Upper lobe of right lung (tissue), 1 donor: ENCODE measurements at regions of chr17 and their contacts with region 1.

Region 1: DNA sequence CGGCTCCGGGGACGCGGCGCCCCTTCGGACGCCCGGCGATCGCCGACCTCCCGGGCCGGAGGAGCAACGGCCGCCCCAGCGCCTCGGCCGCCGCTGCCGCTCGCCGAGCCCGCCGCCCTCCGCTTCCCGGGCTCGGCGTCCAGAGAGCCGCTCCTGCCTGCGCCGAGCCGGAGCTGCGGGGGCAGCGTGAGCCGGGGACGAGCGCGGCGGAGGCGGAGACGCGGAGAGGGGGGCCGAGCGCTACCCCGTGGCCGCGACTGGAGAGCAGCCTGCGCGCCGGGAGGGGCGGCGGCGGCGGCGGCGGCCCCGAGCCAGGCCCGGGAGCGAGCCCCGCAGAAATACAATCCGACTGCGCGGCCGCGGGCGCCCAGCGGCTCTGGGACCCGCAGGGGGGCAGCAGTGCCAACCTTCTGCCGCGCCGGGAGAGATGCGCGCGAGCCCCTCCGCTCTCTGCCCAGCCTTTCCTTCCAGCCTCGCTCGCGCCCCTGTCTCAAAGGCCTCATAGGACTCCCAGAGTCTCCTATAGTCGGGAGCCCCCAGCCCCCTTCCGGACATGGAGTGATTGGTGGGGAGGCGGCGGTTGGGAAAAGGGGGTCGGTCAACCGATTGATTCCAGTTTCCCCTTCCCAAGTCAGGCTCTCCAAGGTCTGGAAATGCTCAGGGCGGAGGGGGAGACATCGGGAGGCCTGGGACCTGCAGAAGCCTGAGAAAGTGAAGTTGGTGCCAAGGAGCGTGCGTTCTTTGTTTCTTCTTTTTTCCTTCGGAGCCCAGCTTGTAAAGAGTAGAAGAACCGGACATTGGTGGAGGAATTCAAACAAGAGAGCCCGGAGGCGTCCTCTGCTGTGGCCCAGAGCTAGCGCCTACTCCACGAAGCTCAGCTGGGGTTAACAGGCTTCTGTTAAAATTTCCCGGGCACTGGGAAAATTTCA is 1.1 kb upstream of the SDK2 start:
- DNase-seq: peak; percentile 68
- ATAC-seq: peak; percentile 67
- H3K4me3 ChIP-seq: peak overlapping the region; percentile 48
- H3K27ac ChIP-seq: no peak overlapping the region
- H3K4me1 ChIP-seq: peaks cover 18% of the 10 kb centered on the region
- H3K27me3 ChIP-seq: peaks cover 70% of the 10 kb centered on the region
- CTCF ChIP-seq: peak; percentile 8

Region 2: DNA sequence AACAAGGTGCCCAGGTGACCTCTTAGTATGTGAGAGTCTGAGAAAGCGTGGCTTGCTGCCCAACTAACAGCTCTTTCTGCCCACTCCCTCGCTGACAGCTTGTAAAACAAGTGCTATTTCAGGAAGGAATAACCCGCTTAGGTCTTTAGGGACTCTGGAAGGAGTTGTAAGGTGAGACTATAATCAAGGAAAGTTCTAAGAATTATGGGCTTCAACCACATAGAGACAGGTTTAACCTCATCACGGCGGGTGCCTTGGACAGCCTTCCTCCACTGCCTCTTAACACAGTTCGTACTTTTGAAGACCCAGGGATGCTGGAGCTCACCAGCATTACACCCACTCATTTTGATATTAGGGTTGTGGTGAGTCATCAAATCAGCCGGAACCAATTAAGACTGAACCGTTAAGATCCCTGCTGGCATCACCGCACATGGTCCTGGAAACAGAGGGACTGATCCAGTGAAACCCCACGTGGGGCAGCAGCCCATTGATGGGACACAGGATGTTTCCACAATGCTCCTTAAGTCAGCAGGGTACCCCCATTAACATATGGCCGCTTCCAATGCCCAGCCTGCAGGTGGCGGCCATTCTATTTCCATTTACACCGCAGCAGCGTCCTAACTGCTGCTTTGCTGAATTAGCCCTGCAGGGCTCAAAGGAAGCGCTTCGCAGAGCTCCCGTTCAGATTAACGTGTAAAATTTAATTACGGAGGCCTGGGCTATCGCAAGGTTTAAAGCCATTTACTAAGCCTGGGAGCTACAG is 175.6 kb after region 1 on chr17:
- intact Hi-C with region 1: no loop called
- DNase-seq: no peak
- ATAC-seq: no peak
- H3K4me3 ChIP-seq: no peak overlapping the region
- H3K27ac ChIP-seq: no peak overlapping the region
- H3K4me1 ChIP-seq: no peaks in the 10 kb centered on the region
- H3K27me3 ChIP-seq: no peaks in the 10 kb centered on the region
- CTCF ChIP-seq: peak; percentile 23

Region 3: DNA sequence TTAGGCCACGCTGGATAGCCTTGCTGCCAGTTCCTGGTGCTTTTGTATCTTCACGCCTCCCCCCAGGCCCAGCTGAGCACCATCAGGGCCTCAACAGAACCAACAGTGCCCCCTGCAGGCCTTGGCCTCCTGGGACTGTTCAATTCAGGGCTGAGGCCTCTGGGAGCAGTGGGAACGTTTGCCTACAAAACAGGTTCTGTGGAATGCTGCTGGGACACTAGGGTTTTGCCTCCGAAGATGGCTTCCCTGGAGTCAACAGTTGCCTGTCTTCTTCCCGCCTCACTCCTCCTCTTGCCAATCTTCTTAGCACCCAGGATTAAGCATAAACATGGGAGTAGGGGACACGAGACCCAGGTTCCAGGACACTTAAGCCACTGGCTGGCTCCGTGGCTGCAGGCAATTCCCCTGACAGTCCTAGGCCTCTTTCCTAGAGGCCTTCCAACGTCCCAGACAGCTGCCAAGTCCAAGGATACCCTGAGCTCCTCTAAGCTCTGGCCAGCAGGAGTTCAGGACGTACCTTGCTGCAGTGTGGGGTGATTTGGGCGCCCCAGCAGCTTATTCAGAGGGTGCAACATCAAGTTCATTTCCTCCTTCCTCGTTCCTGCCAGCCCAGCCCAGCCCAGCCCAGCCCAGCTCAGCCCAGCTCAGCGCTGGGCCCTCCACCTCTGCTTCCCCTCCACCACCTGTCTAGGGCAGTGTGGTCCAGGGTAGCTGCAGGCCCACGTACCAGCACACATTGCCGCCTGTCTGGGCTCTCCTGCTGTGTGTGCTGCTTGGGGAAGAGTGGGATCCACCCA is 311.6 kb after region 1 on chr17:
- intact Hi-C with region 1: loop called (anchors 10 kb)
- DNase-seq: peak; percentile 70
- ATAC-seq: peak; percentile 61
- H3K4me3 ChIP-seq: no peak overlapping the region
- H3K27ac ChIP-seq: no peak overlapping the region
- H3K4me1 ChIP-seq: peaks cover 6% of the 10 kb centered on the region
- H3K27me3 ChIP-seq: peaks cover 2% of the 10 kb centered on the region
- CTCF ChIP-seq: peak; percentile 54